ENCODE measurements at regions of chrX and their contacts with region 1.

Region 1: DNA sequence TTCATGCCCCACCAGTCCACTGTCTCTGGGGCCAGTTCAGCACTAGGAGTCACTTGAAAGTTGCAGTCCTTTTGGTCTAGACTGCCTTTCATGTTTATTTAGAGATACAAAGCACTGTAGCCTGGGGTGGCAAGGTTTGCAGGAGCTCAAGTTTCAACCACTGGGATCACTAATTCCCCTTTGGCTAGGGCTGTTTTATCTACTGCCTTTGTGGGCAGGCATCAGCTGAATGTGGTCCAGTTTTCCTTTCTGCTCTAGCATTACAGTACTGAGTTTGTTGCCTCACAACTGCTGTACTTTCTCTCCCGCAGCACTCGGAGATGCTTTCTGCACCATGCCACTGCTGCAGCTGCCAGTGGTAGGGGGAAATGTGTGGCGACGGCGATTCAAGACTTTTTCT is 222.3 kb upstream of the HDX start:
- DNase-seq: no peak
- ATAC-seq: no peak; the same call in 1 of the 2 replicates
- H3K4me3 ChIP-seq: no peak overlapping the region
- H3K27ac ChIP-seq: no peak overlapping the region
- H3K4me1 ChIP-seq: no peaks in the 10 kb centered on the region
- H3K27me3 ChIP-seq: no peaks in the 10 kb centered on the region
- CTCF ChIP-seq: no peak

Region 2: DNA sequence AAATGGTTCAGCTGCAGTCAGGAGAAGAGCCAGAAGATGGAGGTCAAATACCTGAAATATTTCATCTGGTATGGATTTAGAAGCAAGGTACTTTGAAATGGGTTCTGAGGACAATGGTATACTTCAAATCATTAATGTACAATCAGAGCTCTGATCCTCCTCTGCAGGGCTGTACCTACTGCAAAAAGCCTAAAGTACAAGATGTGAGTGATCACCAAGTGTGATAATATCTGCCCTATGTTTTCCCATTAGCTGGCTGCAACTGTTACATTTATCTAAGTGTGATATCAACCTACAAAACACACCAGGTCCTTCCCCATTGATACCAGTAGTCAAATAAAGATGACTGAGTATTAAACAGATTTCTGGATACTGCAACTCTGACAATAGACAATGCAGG is 247.5 kb before region 1 on chrX:
- CTCF ChIA-PET with region 1: interaction called, 14 read pairs
- POLR2A ChIA-PET with region 1: no interaction called
- intact Hi-C with region 1: no loop called
- DNase-seq: no peak
- ATAC-seq: no peak
- H3K4me3 ChIP-seq: no peak overlapping the region
- H3K27ac ChIP-seq: no peak overlapping the region
- H3K4me1 ChIP-seq: no peaks in the 10 kb centered on the region
- H3K27me3 ChIP-seq: no peaks in the 10 kb centered on the region
- CTCF ChIP-seq: no peak

Region 3: DNA sequence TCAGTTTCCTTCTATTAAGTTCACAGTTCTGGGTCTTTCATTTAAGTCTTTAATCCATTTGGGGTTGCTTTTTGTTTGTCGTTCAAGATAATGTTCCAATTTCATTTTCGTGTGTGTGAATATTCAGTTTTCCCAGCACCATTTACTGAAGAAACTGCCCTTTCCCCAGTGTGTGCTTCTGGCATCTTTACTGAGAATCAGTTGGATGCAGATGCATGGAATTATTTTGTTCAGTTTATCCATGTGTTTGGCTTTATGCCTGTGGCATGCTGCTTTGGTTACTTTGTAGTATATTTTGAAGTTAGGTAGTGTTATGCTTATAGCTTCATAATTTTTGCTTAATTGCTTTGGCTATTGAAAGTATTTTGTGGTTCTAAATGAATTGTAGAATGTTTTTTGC is 58.5 kb before region 1 on chrX:
- CTCF ChIA-PET with region 1: no interaction called
- POLR2A ChIA-PET with region 1: no interaction called
- intact Hi-C with region 1: no loop called
- DNase-seq: no peak
- ATAC-seq: no peak
- H3K4me3 ChIP-seq: no peak overlapping the region
- H3K27ac ChIP-seq: no peak overlapping the region
- H3K4me1 ChIP-seq: no peaks in the 10 kb centered on the region
- H3K27me3 ChIP-seq: no peaks in the 10 kb centered on the region
- CTCF ChIP-seq: no peak

Region 4: DNA sequence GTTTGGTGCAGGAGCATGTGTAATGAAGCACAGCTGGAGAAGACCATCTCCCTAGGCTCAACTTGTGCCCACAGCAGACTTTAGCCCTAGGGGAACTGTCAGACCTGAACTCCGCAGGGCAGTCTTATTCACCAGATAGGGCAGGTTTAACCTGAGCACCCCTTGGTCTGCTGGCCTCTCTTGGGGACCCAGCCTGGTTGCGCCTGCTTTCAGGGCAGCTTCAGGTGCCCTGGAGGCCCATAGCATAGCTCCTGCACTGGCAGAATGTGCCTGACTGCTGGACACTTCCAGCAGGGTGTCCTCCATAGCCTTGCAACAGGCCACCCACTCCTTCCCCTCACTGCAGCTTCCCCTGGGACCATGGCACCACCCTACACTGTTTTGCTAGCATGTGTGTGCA is 66.2 kb after region 1 on chrX:
- CTCF ChIA-PET with region 1: no interaction called
- POLR2A ChIA-PET with region 1: no interaction called
- intact Hi-C with region 1: no loop called
- DNase-seq: no peak
- ATAC-seq: no peak
- H3K4me3 ChIP-seq: no peak overlapping the region
- H3K27ac ChIP-seq: no peak overlapping the region
- H3K4me1 ChIP-seq: no peaks in the 10 kb centered on the region
- H3K27me3 ChIP-seq: no peaks in the 10 kb centered on the region
- CTCF ChIP-seq: no peak

Measured in PC-3 (cell line).